PC-9 (cell line): ENCODE measurements at regions of chr1 and their contacts with region 1.

Region 1: GRCh38 chr1:87131809-87132283 is 196.8 kb upstream of the LMO4 start:
- DNase-seq: peak; percentile 55 to 69
- H3K4me3 ChIP-seq: peak overlapping the region; percentile 46; the same call in 1 of the 2 replicates
- H3K27ac ChIP-seq: no peak overlapping the region
- H3K4me1 ChIP-seq: 0 out of 2 replicates have a peak, but pooled peaks cover 12% of the 10 kb centered on the region
- H3K27me3 ChIP-seq: no peaks in the 10 kb centered on the region
- CTCF ChIP-seq: peak; percentile 97

Region 2: DNA sequence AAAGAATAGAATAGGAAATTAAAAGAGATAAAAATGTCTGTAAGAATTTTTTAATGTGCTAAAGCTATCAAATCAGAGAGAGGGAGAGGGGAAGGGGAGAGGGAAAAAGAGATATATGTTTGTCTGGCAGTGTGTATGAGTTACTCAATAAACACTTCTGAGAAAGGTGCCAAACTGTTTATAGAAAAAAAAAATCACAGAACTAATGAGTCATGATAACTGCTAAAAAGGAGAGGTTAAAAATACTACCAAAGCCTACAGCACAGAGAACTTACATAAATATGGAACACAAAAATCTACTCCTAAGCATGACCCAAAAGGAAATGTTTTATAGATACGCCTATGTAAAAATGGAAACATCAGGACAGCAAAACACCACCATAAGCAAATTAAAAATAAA is 263.4 kb before region 1 on chr1:
- CTCF ChIA-PET with region 1: no interaction called
- POLR2A ChIA-PET with region 1: interaction called, 10 read pairs
- intact Hi-C with region 1: no loop called
- DNase-seq: no peak
- H3K4me3 ChIP-seq: no peak overlapping the region
- H3K27ac ChIP-seq: peak overlapping the region; percentile 2; the same call in 1 of the 2 replicates
- H3K4me1 ChIP-seq: peaks cover 11% of the 10 kb centered on the region
- H3K27me3 ChIP-seq: no peaks in the 10 kb centered on the region
- CTCF ChIP-seq: no peak

Region 3: GRCh38 chr1:87292684-87293493 is 161.0 kb after region 1 on chr1:
- CTCF ChIA-PET with region 1: interaction called, 4 read pairs
- POLR2A ChIA-PET with region 1: no interaction called
- intact Hi-C with region 1: loop called (anchors 2 kb)
- DNase-seq: peak; percentile 42 to 48
- H3K4me3 ChIP-seq: no peak overlapping the region
- H3K27ac ChIP-seq: no peak overlapping the region
- H3K4me1 ChIP-seq: no peaks in the 10 kb centered on the region
- H3K27me3 ChIP-seq: no peaks in the 10 kb centered on the region
- CTCF ChIP-seq: peak; percentile 96

Region 4: GRCh38 chr1:87426463-87427249 is 294.8 kb after region 1 on chr1:
- CTCF ChIA-PET with region 1: no interaction called
- POLR2A ChIA-PET with region 1: no interaction called
- intact Hi-C with region 1: no loop called
- DNase-seq: no peak
- H3K4me3 ChIP-seq: no peak overlapping the region
- H3K27ac ChIP-seq: no peak overlapping the region
- H3K4me1 ChIP-seq: peaks cover 8% of the 10 kb centered on the region; the same call in 1 of the 2 replicates
- H3K27me3 ChIP-seq: no peaks in the 10 kb centered on the region
- CTCF ChIP-seq: no peak